ENCODE measurements at regions of chr17 and their contacts with region 1.

Region 1: DNA sequence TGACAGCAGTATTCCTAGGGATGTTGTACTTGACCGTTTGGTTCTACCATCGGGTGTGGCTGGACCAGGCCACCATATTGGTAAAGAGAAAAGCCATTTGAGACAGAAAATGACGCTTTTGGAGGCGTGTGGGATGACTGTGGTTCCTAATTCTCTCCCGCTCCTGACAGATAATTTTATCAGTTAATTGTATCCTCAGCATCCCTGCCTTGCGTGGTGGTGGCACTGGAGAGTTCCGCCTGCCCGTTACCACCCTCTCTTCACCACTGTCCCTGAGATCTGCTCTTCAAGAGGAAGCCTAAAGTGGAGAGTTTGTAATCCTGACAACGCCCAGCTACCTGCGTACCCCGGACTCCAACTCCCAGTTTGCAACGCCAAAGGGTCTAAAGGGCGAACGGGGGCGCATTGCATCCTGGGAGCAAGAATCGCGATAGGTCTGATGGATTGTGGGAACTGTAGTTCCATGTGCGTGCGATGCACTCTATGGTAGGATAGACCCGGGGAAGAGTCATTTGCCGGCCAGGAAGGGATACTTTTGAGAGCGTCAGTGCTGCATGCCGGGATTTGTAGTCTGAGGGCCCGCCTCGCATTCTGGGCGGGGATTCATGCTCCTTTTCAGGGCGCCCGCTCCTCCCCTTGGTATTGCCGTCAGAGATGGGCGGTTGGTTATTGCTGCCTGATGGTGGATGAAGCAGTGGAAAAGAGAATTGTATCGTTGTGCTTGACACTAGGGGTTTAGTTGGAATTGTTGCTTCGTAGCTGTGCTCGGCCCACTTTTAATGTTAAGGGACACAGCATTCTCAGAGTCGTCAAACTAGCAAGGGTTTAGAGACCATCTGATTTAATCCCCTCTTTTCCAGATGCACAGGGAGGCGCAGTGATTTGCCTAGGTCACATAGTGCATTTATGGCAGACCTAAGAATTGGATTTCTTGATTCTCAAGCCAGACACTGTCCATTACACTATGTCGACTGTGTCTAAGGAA is 965 bp upstream of the PHF12 start:
- DNase-seq: peak; percentile 79 to 99 (median 96)
- ATAC-seq: peak; percentile 82
- H3K4me3 ChIP-seq: peak overlapping the region; percentile 84
- H3K4me3 Mint-ChIP-seq: no peak overlapping the region
- H3K27ac ChIP-seq: peak overlapping the region; percentile 81
- H3K27ac Mint-ChIP-seq: no peak overlapping the region
- H3K4me1 ChIP-seq: peaks cover 19 to 26% of the 10 kb centered on the region in 2 donors
- H3K4me1 Mint-ChIP-seq: peaks cover 12 to 24% (median 14%) of the 10 kb centered on the region in 7 donors
- H3K27me3 ChIP-seq: no peaks in the 10 kb centered on the region
- H3K27me3 Mint-ChIP-seq: peaks cover 0 to 4% (median 0%) of the 10 kb centered on the region in 5 donors

Region 2: GRCh38 chr17:28041068-28041843 is 911.0 kb before region 1 on chr17:
- CTCF ChIA-PET with region 1: no interaction called
- POLR2A ChIA-PET with region 1: no interaction called
- intact Hi-C with region 1: loop called in 1 of 2 experiments (anchors 5 kb)
- DNase-seq: peak; percentile 94 to 99 (median 99)
- ATAC-seq: peak; percentile 96
- H3K4me3 ChIP-seq: peak overlapping the region; percentile 45
- H3K4me3 Mint-ChIP-seq: peak overlapping the region; percentile 82 to 92 (median 88)
- H3K27ac ChIP-seq: peak overlapping the region; percentile 71
- H3K27ac Mint-ChIP-seq: peak overlapping the region; percentile 75 to 93 (median 88)
- H3K4me1 ChIP-seq: peaks cover 28 to 40% of the 10 kb centered on the region in 2 donors
- H3K4me1 Mint-ChIP-seq: peaks cover 35 to 65% (median 60%) of the 10 kb centered on the region in 7 donors
- H3K27me3 ChIP-seq: no peaks in the 10 kb centered on the region
- H3K27me3 Mint-ChIP-seq: peaks cover 0 to 16% (median 0%) of the 10 kb centered on the region in 5 donors

Region 3: DNA sequence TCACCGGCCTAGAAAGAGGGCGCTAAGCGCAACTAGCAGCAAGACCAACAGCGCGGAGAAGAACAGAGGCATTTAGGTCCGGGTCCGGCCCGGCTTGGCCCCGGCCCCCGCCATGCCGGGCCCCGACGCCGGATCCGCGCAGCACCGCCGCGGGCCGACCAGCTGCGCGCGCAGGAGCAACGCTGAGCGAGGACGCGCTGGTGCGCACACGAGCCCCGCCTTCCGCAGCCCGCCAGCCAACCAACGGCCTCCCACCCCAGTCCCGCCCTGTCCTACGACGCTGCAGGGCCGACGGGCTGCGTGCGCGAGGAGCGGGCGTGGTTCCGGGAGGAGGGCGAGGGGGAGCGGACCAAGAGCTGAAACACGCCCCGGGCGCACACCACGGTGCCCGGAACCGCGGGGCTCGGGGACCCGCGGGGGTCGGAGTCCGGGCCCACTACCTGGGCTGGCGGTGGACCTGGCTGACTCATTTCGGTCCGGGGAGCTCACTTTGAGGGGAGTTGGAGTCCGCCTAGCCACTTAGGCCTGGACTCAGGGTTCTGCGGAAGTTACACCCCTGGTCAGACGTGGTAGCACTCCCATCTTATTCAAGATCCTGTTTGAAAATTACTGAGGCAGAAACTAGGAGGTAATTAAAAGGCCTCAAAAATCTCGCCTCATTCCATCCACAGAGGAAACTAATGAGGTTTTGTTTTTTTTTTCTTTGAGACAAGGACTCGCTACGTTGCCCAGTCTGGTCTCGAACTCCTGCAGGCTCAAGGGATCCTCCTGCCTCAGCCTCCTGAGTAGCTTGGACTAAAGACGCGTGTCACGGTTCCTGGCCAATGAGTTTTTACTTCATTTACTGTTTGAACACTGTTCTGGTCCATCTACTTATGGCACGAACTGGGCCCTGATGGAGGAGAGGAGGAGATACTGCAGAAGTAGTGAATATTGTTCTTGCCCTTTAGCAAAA is 307.0 kb before region 1 on chr17 and contains the start of gene BLTP2:
- CTCF ChIA-PET with region 1: interaction called, 4 read pairs
- POLR2A ChIA-PET with region 1: interaction called, 8 read pairs
- intact Hi-C with region 1: loop called (anchors 1 to 5 kb)
- DNase-seq: peak; percentile 86 to 95 (median 93)
- ATAC-seq: peak; percentile 99
- H3K4me3 ChIP-seq: peak within 1 kb of the TSS; percentile 87
- H3K4me3 Mint-ChIP-seq: peak within 1 kb of the TSS; percentile 89 to 99 (median 94)
- H3K27ac ChIP-seq: peak within 1 kb of the TSS; percentile 95
- H3K27ac Mint-ChIP-seq: peak within 1 kb of the TSS; percentile 90 to 99 (median 97)
- H3K4me1 ChIP-seq: peaks cover 26 to 29% of the 10 kb centered on the region in 2 donors
- H3K4me1 Mint-ChIP-seq: peaks cover 29 to 57% (median 39%) of the 10 kb centered on the region in 7 donors
- H3K27me3 ChIP-seq: no peaks in the 10 kb centered on the region
- H3K27me3 Mint-ChIP-seq: no peaks in the 10 kb centered on the region
- total RNA-seq, gene BLTP2: 143 to 163 (median 153) TPM

Region 4: DNA sequence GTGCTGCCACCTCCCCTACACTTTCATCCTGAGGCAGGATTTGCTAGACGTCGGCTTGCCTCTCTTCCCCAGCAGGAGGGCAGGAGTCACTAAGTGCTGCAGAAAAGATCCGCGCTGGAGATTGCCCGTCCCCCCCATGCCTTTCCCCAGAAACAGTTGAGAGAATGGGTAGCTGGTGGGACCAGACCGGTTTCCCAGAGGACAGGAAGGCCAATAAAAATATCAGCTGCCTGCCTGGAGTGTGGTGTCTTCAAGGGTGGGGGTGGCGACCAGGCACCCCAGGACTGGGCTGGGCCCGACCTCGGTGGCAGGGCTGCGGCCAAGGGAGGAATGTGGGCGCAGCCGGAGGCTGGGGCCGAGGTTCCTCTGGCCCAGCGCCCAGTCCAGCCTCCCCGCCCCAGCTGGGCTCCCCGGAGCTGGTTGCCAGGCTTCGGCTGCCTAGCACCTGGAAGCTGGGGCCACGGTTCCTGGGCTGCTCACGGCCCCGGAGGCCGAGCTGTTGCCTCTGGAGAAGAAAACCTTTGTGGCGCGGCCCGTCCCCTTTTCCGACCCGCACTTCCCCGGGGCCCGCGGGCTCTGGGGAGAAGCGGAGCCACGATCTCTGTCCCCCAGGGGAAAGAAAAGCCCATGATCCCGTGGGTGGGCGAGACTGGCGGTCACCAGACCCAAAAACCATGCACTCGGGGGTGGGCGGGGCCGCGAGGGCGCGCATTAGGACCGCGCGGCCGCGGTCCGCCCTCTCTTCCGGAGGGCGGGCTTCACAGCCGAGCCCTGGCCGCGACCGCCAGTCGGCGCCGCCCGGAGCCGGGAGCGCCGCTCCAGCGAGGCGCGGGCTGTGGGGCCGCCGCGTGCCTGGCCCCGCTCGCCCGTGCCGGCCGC is 208.8 kb before region 1 on chr17 and contains the start of gene TRAF4:
- CTCF ChIA-PET with region 1: interaction called, 4 read pairs
- POLR2A ChIA-PET with region 1: interaction called, 13 read pairs
- intact Hi-C with region 1: loop called in 1 of 2 experiments (anchors 1 kb)
- DNase-seq: peak; percentile 60 to 86 (median 73)
- ATAC-seq: peak; percentile 93
- H3K4me3 ChIP-seq: peak within 1 kb of the TSS; percentile 82
- H3K4me3 Mint-ChIP-seq: peak within 1 kb of the TSS; percentile 87 to 94 (median 91)
- H3K27ac ChIP-seq: peak within 1 kb of the TSS; percentile 83
- H3K27ac Mint-ChIP-seq: peak within 1 kb of the TSS; percentile 78 to 95 (median 92)
- H3K4me1 ChIP-seq: peaks cover 11 to 28% of the 10 kb centered on the region in 2 donors
- H3K4me1 Mint-ChIP-seq: peaks cover 2 to 42% (median 27%) of the 10 kb centered on the region in 7 donors
- H3K27me3 ChIP-seq: no peaks in the 10 kb centered on the region
- H3K27me3 Mint-ChIP-seq: no peaks in the 10 kb centered on the region
- total RNA-seq, gene TRAF4: 22.3 to 228 (median 81.6) TPM

Region 5: GRCh38 chr17:28896884-28897768 is 55.2 kb before region 1 on chr17 and contains the start of gene FLOT2:
- CTCF ChIA-PET with region 1: interaction called, 4 read pairs
- POLR2A ChIA-PET with region 1: interaction called, 183 read pairs
- intact Hi-C with region 1: loop called in 1 of 2 experiments (anchors 1 kb)
- DNase-seq: peak; percentile 41 to 77 (median 76)
- ATAC-seq: peak; percentile 84
- H3K4me3 ChIP-seq: peak within 1 kb of the TSS; percentile 82
- H3K4me3 Mint-ChIP-seq: peak within 1 kb of the TSS; percentile 86 to 98 (median 96)
- H3K27ac ChIP-seq: peak within 1 kb of the TSS; percentile 96
- H3K27ac Mint-ChIP-seq: peak within 1 kb of the TSS; percentile 95 to 99 (median 97)
- H3K4me1 ChIP-seq: peaks cover 43 to 45% of the 10 kb centered on the region in 2 donors
- H3K4me1 Mint-ChIP-seq: peaks cover 32 to 80% (median 64%) of the 10 kb centered on the region in 7 donors
- H3K27me3 ChIP-seq: no peaks in the 10 kb centered on the region
- H3K27me3 Mint-ChIP-seq: no peaks in the 10 kb centered on the region
- total RNA-seq, gene FLOT2: 134 to 252 (median 191) TPM

Region 6: GRCh38 chr17:28937044-28937729 is 15.1 kb before region 1 on chr17:
- CTCF ChIA-PET with region 1: interaction called, 3 read pairs
- POLR2A ChIA-PET with region 1: interaction called, 107 read pairs
- intact Hi-C with region 1: loop called in 1 of 2 experiments (anchors 1 kb)
- DNase-seq: no peak
- ATAC-seq: peak; percentile 8
- H3K4me3 ChIP-seq: no peak overlapping the region
- H3K4me3 Mint-ChIP-seq: peak overlapping the region in 1 of 10 donors; percentile 36
- H3K27ac ChIP-seq: no peak overlapping the region
- H3K27ac Mint-ChIP-seq: peak overlapping the region in 6 of 9 donors; percentile 32 to 79 (median 71)
- H3K4me1 ChIP-seq: peaks cover 20 to 41% of the 10 kb centered on the region in 2 donors
- H3K4me1 Mint-ChIP-seq: peaks cover 63 to 95% (median 88%) of the 10 kb centered on the region in 7 donors
- H3K27me3 ChIP-seq: no peaks in the 10 kb centered on the region
- H3K27me3 Mint-ChIP-seq: no peaks in the 10 kb centered on the region

Region 7: GRCh38 chr17:29568331-29569244 is 616.3 kb after region 1 on chr17 and contains the start of gene TP53I13:
- CTCF ChIA-PET with region 1: no interaction called
- POLR2A ChIA-PET with region 1: interaction called, 4 read pairs
- intact Hi-C with region 1: loop called (anchors 5 kb)
- DNase-seq: peak; percentile 65 to 90 (median 81)
- ATAC-seq: peak; percentile 81
- H3K4me3 ChIP-seq: peak within 1 kb of the TSS; percentile 89
- H3K4me3 Mint-ChIP-seq: peak within 1 kb of the TSS; percentile 88 to 99 (median 95)
- H3K27ac ChIP-seq: peak within 1 kb of the TSS; percentile 78
- H3K27ac Mint-ChIP-seq: peak within 1 kb of the TSS; percentile 82 to 97 (median 92)
- H3K4me1 ChIP-seq: peaks cover 12 to 30% of the 10 kb centered on the region in 2 donors
- H3K4me1 Mint-ChIP-seq: peaks cover 21 to 42% (median 32%) of the 10 kb centered on the region in 7 donors
- H3K27me3 ChIP-seq: no peaks in the 10 kb centered on the region
- H3K27me3 Mint-ChIP-seq: no peaks in the 10 kb centered on the region
- total RNA-seq, gene TP53I13: 61.6 to 87.5 (median 62.8) TPM